Activated naive CD4-positive, alpha-beta T cell treated with anti-CD3 and anti-CD28 coated beads for 36 hours (primary cell): ENCODE measurements at regions of chr11 and their contacts with region 1.

Region 1: GRCh38 chr11:66616379-66617154 is at the start of gene RBM14:
- DNase-seq: peak; percentile 99
- H3K4me3 Mint-ChIP-seq: peak within 1 kb of the TSS; percentile 98
- H3K27ac Mint-ChIP-seq: peak within 1 kb of the TSS; percentile 98
- H3K4me1 Mint-ChIP-seq: peaks cover 36% of the 10 kb centered on the region
- H3K27me3 Mint-ChIP-seq: no peaks in the 10 kb centered on the region
- total RNA-seq, gene RBM14: 160 to 173 TPM

Region 2: GRCh38 chr11:66545701-66546367 is 70.7 kb before region 1 on chr11 and contains the start of gene ZDHHC24:
- CTCF ChIA-PET with region 1: no interaction called
- intact Hi-C with region 1: loop called (anchors 2 kb)
- DNase-seq: peak; percentile 91
- H3K4me3 Mint-ChIP-seq: peak within 1 kb of the TSS; percentile 75
- H3K27ac Mint-ChIP-seq: peak within 1 kb of the TSS; percentile 30
- H3K4me1 Mint-ChIP-seq: peaks cover 18% of the 10 kb centered on the region
- H3K27me3 Mint-ChIP-seq: no peaks in the 10 kb centered on the region
- total RNA-seq, gene ZDHHC24: 11.5 to 13.4 TPM

Region 3: GRCh38 chr11:66556086-66556485 is 60.5 kb before region 1 on chr11:
- CTCF ChIA-PET with region 1: no interaction called
- intact Hi-C with region 1: no loop called
- DNase-seq: no peak
- H3K4me3 Mint-ChIP-seq: no peak overlapping the region
- H3K27ac Mint-ChIP-seq: no peak overlapping the region
- H3K4me1 Mint-ChIP-seq: no peaks in the 10 kb centered on the region
- H3K27me3 Mint-ChIP-seq: peaks cover 6% of the 10 kb centered on the region

Region 4: GRCh38 chr11:66638177-66639065 is 21.9 kb after region 1 on chr11 and contains the start of gene RBM4:
- CTCF ChIA-PET with region 1: interaction called, 11 read pairs
- intact Hi-C with region 1: loop called (anchors 1 kb)
- DNase-seq: peak; percentile 99
- H3K4me3 Mint-ChIP-seq: peak within 1 kb of the TSS; percentile 95
- H3K27ac Mint-ChIP-seq: peak within 1 kb of the TSS; percentile 96
- H3K4me1 Mint-ChIP-seq: peaks cover 61% of the 10 kb centered on the region
- H3K27me3 Mint-ChIP-seq: no peaks in the 10 kb centered on the region
- total RNA-seq, gene RBM4: 85.9 to 98.1 TPM

Region 5: GRCh38 chr11:66842896-66843775 is 226.6 kb after region 1 on chr11 and contains the start of gene RCE1:
- CTCF ChIA-PET with region 1: no interaction called
- intact Hi-C with region 1: loop called (anchors 1 kb)
- DNase-seq: peak; percentile 91
- H3K4me3 Mint-ChIP-seq: peak within 1 kb of the TSS; percentile 87
- H3K27ac Mint-ChIP-seq: peak within 1 kb of the TSS; percentile 90
- H3K4me1 Mint-ChIP-seq: peaks cover 47% of the 10 kb centered on the region
- H3K27me3 Mint-ChIP-seq: no peaks in the 10 kb centered on the region
- total RNA-seq, gene RCE1: 19.3 to 20.6 TPM

Region 6: GRCh38 chr11:67118801-67119584 is 502.4 kb after region 1 on chr11 and contains the start of gene KDM2A:
- CTCF ChIA-PET with region 1: no interaction called
- intact Hi-C with region 1: loop called (anchors 1 kb)
- DNase-seq: peak; percentile 99
- H3K4me3 Mint-ChIP-seq: peak within 1 kb of the TSS; percentile 97
- H3K27ac Mint-ChIP-seq: peak within 1 kb of the TSS; percentile 92
- H3K4me1 Mint-ChIP-seq: peaks cover 41% of the 10 kb centered on the region
- H3K27me3 Mint-ChIP-seq: no peaks in the 10 kb centered on the region
- total RNA-seq, gene KDM2A: 57.7 to 58.8 TPM